BJ (cell line): ENCODE measurements at regions of chr2 and their contacts with region 1.

Region 1: DNA sequence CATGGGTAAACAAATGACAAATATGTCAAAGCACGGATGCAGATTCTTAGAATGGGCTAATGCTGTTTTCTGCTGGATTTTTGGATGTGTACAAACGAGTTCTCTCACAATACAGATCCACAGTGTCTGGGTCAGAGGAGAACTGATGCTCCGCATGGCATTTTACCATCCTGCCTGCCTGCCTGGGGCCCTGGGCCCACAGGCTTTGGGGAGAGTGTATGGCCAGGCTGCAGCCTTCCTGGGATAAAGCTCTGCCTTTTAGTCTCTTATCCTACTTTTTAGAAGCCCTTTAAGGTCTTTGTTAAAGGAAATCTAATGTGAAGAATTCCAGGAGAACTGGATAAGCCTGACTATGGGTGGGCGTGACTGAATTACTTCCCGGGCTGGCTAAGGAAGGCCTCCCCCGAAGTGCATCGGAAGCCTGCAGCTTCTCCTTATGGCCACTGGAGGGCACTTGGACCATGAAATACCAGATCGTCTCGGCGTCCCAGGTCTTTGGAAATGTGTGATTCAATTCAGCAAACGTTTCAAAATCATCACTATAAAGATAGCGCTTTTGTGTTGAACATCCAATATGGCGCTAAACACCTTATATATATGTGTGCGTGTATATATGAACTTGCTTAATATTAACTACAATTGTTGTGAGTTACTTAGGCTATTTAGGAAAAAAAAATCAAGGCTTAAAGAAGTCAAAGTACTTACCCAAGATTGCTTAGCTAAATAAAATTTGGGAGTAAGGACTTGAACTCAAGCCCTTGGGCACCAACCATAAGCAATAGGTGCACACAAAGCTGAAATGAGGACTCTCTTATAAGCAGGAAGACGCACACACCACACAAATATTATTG is 15.2 kb upstream of the DNPEP start:
- DNase-seq: peak; percentile 17
- H3K4me3 ChIP-seq: no peak overlapping the region
- H3K27me3 ChIP-seq: no peaks in the 10 kb centered on the region
- CTCF ChIP-seq: peak; percentile 93

Region 2: DNA sequence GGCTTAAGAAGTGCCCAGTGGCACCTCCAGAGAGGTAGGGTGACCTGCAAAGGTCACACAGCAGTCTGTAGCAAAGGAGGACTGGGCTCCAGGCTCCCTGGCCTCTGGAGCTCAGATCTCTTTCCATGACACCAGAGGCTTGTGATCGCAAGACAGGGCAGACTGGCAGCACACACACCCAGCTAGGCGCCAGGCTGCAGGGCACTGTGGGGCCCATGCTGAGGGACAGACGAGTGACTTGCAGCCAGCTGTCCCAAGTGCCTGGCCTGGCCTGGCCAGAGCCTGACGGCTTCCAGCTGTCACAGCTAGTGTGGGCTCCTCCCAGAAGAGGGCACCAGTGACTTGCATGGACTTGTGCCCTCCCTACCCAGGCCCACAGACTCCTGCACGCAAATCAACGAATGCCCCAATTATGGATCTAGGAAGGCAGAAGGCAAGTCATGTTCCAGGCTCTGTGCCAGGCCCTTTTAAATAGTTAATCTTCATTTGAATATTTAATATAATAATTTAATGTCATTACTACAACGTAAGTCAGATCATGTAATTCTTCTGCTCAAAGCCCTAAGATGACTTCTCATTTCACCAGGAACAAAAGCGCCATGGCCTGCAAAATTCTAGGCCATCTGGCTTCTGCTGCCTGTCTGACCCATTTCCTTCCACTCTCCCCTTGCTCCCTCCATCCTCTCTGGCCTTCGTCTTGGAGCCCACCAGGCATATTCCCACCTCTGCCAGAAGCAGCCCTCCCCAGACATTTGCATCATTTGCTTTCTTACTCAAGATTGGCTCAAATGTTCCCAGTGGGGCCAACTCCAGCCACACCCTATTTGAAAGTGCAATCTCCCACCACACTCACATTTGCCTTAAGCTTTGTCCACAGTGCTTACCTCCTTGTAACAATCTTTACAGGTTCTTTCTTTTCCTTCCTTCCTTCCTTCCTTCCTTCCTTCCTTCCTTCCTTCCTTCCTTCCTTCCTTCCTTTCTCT is 28.0 kb after region 1 on chr2:
- CTCF ChIA-PET with region 1: interaction called, 18 read pairs
- POLR2A ChIA-PET with region 1: no interaction called
- DNase-seq: no peak
- H3K4me3 ChIP-seq: no peak overlapping the region
- H3K27me3 ChIP-seq: 0 out of 2 replicates have a peak, but pooled peaks cover 2% of the 10 kb centered on the region
- CTCF ChIP-seq: peak; percentile 35; the same call in 1 of the 2 replicates

Region 3: DNA sequence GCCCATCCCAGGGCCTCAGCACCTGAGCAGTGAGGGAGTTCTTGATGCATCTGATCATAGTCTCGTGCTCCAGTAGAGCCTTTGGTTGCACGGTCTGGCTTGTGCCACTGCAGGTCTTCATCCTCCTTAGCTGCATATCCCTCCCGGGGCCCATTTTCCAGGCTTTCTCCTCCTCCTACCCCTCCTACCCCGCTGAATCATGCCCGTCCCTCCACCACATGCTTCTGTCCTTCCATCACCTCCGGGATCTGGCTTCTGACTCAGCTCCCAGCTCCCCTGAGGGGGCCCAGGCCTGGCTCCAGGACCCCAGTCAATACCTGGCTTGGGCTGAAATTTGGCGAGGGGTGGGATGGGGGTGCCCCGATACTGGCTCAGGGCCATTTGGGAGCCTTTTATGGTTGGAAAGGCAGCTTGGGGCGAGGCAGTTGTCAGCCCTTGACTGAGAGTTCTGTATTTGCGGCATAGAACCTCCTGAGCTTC is 50.0 kb after region 1 on chr2:
- CTCF ChIA-PET with region 1: interaction called, 17 read pairs
- POLR2A ChIA-PET with region 1: interaction called, 4 read pairs
- DNase-seq: peak; percentile 78
- H3K4me3 ChIP-seq: no peak overlapping the region
- H3K27me3 ChIP-seq: no peaks in the 10 kb centered on the region
- CTCF ChIP-seq: no peak

Region 4: GRCh38 chr2:219475697-219476651 is 73.1 kb after region 1 on chr2:
- CTCF ChIA-PET with region 1: interaction called, 26 read pairs
- POLR2A ChIA-PET with region 1: no interaction called
- DNase-seq: no peak
- H3K4me3 ChIP-seq: no peak overlapping the region
- H3K27me3 ChIP-seq: no peaks in the 10 kb centered on the region
- CTCF ChIP-seq: peak; percentile 93

Region 5: DNA sequence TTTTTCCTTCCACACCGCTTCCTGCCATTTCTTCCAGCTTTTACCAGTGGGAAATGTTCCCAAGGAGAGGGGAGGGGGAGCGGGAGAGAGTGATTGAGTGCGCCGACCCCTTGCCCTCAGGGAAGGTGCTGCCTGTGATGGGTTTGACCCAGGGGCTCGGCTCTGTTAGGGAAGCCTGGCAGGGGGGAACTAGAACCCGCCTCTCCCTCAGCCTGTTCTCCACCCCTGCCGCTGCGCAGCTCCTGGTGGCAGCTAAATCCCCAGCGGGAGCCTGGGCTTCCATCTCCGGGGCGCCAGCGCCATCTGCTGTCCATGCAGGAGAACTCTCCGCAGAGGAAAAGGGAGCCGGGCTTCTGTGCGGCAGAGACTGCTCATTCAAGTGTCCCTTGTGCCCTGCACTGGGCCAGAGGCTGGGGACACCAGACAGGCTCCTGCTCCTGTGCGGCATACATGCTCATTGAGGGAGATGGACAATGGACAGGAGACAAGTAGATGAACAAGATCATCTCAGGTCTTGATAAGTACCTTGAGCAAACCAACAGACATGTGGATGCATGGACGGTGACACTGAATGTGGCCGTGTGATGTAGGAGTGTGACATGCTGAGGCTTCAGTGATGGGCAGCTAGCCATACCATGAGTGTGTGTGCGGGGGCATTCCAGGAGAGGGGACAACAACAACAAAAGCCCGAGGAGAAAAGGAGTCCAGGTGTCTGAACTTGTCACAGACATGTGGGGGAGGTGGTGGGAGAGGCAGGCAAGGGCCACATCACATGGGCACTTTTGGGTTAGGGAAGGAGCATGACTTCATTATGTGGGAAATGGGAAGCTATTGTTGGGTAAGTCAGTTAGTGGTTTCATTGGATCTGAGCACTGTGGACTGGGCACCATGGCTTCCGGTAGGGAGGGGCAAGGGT is 127.4 kb after region 1 on chr2:
- CTCF ChIA-PET with region 1: interaction called, 291 read pairs
- POLR2A ChIA-PET with region 1: interaction called, 3 read pairs
- DNase-seq: no peak
- H3K4me3 ChIP-seq: peak overlapping the region; percentile 11; the same call in 1 of the 2 replicates
- H3K27me3 ChIP-seq: peaks cover 13% of the 10 kb centered on the region
- CTCF ChIP-seq: peak; percentile 96

Region 6: DNA sequence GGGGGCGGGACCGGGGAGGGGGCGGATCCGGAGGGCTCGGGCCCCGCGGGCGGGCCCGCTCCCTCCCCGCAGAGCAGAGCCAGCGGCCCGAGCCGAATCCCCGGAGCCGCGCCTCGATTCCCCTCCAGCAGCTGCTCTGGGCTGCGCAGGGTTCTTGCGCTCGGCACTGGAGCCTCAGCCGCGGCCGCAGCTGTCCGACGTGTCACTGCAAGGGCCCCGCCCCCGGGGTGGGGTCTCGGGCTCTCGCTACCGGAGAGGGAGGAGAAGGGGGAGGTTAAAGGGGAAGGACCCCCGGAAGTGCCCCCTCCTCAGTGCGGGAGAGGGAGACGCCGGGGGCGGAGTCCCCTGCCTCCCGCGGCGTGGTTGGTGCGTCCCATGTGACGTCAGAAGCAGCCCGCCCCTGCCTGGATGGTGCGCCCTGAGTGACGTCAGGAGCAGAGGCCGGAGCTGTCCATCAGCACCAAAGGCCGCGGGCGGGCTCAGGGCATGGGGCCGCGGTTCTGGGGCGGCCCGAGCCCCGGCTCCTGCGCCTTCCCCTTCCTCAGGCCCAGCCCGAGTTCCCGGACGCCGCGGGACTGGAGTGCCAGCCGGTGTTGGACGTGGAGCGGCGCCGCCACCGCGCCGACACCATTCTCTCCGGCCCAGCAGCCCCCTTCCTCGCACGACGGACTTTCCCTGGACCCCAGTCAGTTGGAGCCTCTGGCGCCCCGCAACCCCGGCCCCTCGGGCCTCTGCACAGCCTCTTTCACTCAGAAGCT is 140.9 kb after region 1 on chr2 and contains the starts of genes CHPF and TMEM198:
- CTCF ChIA-PET with region 1: interaction called, 12 read pairs
- POLR2A ChIA-PET with region 1: no interaction called
- DNase-seq: peak; percentile 86
- H3K4me3 ChIP-seq: peak within 1 kb of the TSS; percentile 84
- H3K27me3 ChIP-seq: no peaks in the 10 kb centered on the region
- CTCF ChIP-seq: no peak
- polyA plus RNA-seq, gene CHPF: 65.0 and 119 TPM in 2 replicates
- polyA plus RNA-seq, gene TMEM198: 2.5 and 4.0 TPM in 2 replicates

Region 7: DNA sequence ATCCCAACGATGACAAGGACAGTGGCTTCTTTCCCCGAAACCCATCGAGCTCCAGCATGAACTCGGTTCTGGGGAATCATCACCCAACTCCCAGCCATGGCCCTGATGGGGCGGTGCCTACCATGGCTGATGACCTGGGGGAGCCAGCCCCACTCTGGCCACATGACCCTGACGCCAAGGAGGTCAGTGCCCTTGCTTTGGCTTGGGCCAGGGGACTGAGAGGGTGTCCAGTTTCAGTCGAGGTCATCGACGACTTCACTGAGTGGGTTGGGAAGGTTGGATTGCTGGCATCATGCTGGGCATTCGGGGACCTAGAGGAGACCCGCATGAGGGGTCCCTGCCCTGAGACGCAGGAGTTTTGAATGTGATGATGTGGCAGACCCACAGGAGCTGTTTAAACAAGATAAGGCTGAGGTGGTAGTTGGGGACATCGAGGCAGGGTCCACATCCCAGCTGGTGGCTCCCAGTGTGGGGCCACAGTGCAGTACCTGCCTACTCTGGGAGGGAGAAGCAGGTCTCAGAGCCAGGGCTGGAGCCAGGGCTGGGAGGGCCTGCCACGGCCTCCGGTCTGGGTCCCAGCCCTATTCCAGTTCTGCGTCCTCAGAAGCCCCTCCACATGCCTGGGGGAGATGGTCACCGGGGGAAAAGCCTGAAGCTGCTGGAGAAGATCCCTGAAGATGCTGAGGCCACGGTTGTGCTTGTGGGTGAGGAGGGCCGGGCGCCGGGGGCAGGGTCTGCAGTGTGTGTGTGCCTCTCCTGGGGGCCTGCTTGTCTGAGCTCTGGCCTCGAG is 230.6 kb after region 1 on chr2:
- CTCF ChIA-PET with region 1: no interaction called
- POLR2A ChIA-PET with region 1: no interaction called
- DNase-seq: no peak
- H3K4me3 ChIP-seq: no peak overlapping the region
- H3K27me3 ChIP-seq: no peaks in the 10 kb centered on the region
- CTCF ChIP-seq: no peak